Ascending aorta (tissue), 2 donors: ENCODE measurements at regions of chr7 and their contacts with region 1.

Region 1: DNA sequence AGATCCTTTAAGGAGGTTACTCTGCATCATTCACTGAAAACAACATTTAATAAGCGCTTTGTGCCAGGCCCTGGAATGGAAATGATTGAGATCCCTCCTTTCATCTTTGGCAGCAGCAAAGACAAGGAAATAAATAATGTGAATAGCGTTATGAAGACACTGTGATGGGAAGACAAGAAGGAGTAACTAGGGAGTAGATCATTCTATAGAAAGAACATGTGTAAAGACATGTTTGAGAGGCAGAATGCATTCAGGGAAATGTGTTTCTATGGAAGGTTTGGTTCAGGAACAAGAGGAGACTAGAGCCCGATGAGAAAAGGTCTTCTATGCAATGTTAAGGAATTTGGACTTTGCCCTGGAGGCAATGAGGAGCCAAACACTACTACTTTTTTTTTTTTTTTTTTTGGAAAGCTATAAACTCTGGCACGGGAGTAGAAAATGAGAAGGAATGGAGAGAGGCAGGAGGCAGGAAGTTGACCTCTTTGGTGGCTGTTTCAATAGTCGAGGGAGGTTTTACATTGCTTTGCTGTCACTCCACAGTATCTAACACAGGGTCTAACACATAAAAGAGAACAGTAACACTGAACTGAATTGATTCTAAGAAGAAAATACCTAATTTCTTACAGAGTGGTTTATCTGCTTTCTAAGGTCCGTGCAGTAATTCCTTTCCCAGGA is 44.9 kb downstream of the SMURF1 start:
- DNase-seq: no peak
- H3K4me3 ChIP-seq: peak overlapping the region; percentile 10 to 32
- H3K27ac ChIP-seq: peak overlapping the region; percentile 79 to 80
- H3K4me1 ChIP-seq: peaks cover 12 to 45% of the 10 kb centered on the region in 2 donors
- H3K27me3 ChIP-seq: no peaks in the 10 kb centered on the region
- CTCF ChIP-seq: no peak

Region 2: GRCh38 chr7:99046722-99047121 is 52.2 kb before region 1 on chr7:
- intact Hi-C with region 1: loop called (anchors 5 kb)
- DNase-seq: peak in 1 of 2 donors; percentile 34
- H3K4me3 ChIP-seq: no peak overlapping the region
- H3K27ac ChIP-seq: no peak overlapping the region
- H3K4me1 ChIP-seq: peaks cover 0 to 5% of the 10 kb centered on the region in 2 donors
- H3K27me3 ChIP-seq: no peaks in the 10 kb centered on the region
- CTCF ChIP-seq: no peak